ENCODE measurements at regions of chr1 and their contacts with region 1.

Region 1: DNA sequence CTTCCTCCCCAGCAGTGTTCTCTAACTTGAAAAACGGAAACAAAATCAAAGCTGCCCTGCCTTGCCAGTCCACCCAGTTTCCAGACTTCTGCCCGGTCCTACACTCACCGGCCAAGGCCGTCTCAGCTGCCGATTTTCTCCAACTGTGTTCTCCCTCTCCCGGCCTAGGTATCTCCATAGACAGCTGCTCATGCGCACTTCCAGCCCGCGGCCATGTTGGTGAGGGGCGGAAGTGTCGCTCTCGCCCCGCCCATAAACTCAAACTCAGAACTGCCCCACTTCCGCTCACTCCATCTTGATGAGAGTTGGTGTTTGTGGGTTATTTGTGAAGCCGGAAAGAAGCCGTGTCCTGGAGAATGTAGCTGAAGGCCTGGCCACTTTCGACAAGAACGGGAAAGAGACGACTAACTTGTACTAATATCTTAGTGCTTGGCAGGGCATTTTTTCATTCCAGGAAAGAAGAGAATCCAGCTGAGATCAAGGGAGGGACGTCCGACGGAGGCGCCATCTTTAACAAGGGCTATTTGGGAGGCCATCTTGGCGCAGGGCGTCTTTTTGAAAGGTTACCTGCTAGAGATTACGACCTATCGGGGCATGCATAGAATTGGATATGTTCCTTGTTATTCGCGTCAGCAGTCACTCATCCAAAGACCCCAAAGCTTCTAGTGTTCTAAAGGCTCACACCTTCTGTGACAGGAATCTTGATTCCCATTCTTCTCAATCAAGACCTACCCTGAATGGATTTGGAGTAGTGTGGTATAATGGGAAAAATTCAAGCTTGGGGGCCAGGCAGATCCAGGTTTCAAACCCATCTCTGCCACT is at the start of gene USF1:
- DNase-seq: peak; percentile 98
- H3K4me3 ChIP-seq: peak within 1 kb of the TSS; percentile 66 to 82 (median 66)
- H3K27ac ChIP-seq: peak within 1 kb of the TSS; percentile 94
- H3K4me1 ChIP-seq: peaks cover 10% of the 10 kb centered on the region
- H3K27me3 ChIP-seq: no peaks in the 10 kb centered on the region
- CTCF ChIP-seq: no peak
- POLR2A ChIP-seq: peak; percentile 76
- total RNA-seq, gene USF1: 56.7 and 57.9 TPM in 2 replicates

Region 2: DNA sequence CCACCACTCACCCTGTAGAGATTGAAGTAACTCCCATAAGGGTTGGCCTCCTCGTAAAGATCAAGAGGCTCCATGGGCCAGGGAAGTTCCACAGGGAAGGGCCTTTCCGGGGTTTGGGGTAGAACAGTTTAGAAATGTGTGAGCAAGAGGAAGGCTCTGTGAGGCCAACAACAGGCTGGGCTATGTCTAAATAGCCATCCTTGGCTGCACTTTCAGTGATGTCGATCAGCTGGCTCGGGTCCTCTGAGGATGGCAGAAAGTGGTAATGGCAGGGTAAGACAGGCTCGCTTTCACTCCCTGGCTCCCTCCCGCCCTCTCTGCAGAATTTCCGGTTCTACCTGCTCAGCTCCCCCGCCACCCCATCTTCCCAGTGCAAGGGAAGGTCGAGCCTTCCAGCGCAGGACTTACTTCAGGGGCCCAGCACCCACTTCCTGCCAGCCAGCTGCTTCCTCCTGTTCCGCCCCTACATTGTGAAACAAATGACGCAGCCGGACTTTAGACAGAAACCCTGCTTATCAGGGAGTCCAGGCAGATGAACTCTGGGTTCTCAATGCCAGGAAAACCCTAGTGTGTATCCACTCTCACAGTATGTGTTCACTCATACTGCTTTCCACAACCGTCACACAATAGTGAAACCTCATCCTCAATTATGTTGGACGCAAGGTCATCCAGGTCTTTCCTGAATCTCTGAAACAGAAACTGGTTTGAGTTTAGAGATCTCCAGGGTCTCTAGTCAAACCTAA is 32.3 kb before region 1 on chr1:
- CTCF ChIA-PET with region 1: interaction called, 3 read pairs
- POLR2A ChIA-PET with region 1: no interaction called
- dilution Hi-C with region 1: no loop called
- intact Hi-C with region 1: loop called (anchors 1 kb)
- DNase-seq: peak; percentile 99
- H3K4me3 ChIP-seq: peak overlapping the region in 2 of 3 experiments; percentile 1 to 21
- H3K27ac ChIP-seq: peak overlapping the region; percentile 99
- H3K4me1 ChIP-seq: peaks cover 37% of the 10 kb centered on the region
- H3K27me3 ChIP-seq: no peaks in the 10 kb centered on the region
- CTCF ChIP-seq: no peak
- POLR2A ChIP-seq: peak; percentile 70

Region 3: GRCh38 chr1:161021165-161021960 is 24.6 kb before region 1 on chr1:
- CTCF ChIA-PET with region 1: interaction called, 8 read pairs
- POLR2A ChIA-PET with region 1: interaction called, 7 read pairs
- dilution Hi-C with region 1: no loop called
- intact Hi-C with region 1: loop called (anchors 1 kb)
- DNase-seq: peak; percentile 84
- H3K4me3 ChIP-seq: peak overlapping the region; percentile 70 to 87 (median 77)
- H3K27ac ChIP-seq: no peak overlapping the region
- H3K4me1 ChIP-seq: peaks cover 39% of the 10 kb centered on the region
- H3K27me3 ChIP-seq: no peaks in the 10 kb centered on the region
- CTCF ChIP-seq: no peak
- POLR2A ChIP-seq: no peak

Region 4: GRCh38 chr1:161132410-161133219 is 86.7 kb after region 1 on chr1 and contains the start of gene DEDD:
- CTCF ChIA-PET with region 1: no interaction called
- POLR2A ChIA-PET with region 1: interaction called, 4 read pairs
- dilution Hi-C with region 1: no loop called
- intact Hi-C with region 1: loop called (anchors 1 kb)
- DNase-seq: peak; percentile 97
- H3K4me3 ChIP-seq: peak within 1 kb of the TSS; percentile 90 to 100 (median 94)
- H3K27ac ChIP-seq: peak within 1 kb of the TSS; percentile 85
- H3K4me1 ChIP-seq: peaks cover 26% of the 10 kb centered on the region
- H3K27me3 ChIP-seq: no peaks in the 10 kb centered on the region
- CTCF ChIP-seq: peak; percentile 1 to 4
- POLR2A ChIP-seq: no peak
- total RNA-seq, gene DEDD: 50.2 and 54.9 TPM in 2 replicates

Region 5: GRCh38 chr1:161139765-161140164 is 93.8 kb after region 1 on chr1:
- CTCF ChIA-PET with region 1: interaction called, 7 read pairs
- POLR2A ChIA-PET with region 1: no interaction called
- dilution Hi-C with region 1: no loop called
- intact Hi-C with region 1: loop called (anchors 2 kb)
- DNase-seq: peak; percentile 75
- H3K4me3 ChIP-seq: no peak overlapping the region
- H3K27ac ChIP-seq: no peak overlapping the region
- H3K4me1 ChIP-seq: no peaks in the 10 kb centered on the region
- H3K27me3 ChIP-seq: no peaks in the 10 kb centered on the region
- CTCF ChIP-seq: peak; percentile 18 to 47
- POLR2A ChIP-seq: no peak